Breast epithelium (tissue), 4 donors: ENCODE measurements at regions of chr1 and their contacts with region 1.

Region 1: GRCh38 chr1:203273206-203273868 is 32.0 kb upstream of the BTG2 start:
- DNase-seq: peak; percentile 84 to 86
- H3K4me3 ChIP-seq: peak overlapping the region; percentile 1 to 50 (median 28)
- H3K27ac ChIP-seq: peak overlapping the region; percentile 67 to 73
- H3K4me1 ChIP-seq: peaks cover 4 to 20% of the 10 kb centered on the region in 2 donors
- H3K27me3 ChIP-seq: no peaks in the 10 kb centered on the region
- CTCF ChIP-seq: peak; percentile 98 to 99 (median 99)
- POLR2A ChIP-seq: no peak

Region 2: GRCh38 chr1:203038891-203039608 is 234.3 kb before region 1 on chr1:
- intact Hi-C with region 1: loop called (anchors 10 kb)
- DNase-seq: peak; percentile 54 to 70
- H3K4me3 ChIP-seq: no peak overlapping the region
- H3K27ac ChIP-seq: no peak overlapping the region
- H3K4me1 ChIP-seq: no peaks in the 10 kb centered on the region
- H3K27me3 ChIP-seq: no peaks in the 10 kb centered on the region
- CTCF ChIP-seq: peak; percentile 85 to 89 (median 89)
- POLR2A ChIP-seq: no peak

Region 3: DNA sequence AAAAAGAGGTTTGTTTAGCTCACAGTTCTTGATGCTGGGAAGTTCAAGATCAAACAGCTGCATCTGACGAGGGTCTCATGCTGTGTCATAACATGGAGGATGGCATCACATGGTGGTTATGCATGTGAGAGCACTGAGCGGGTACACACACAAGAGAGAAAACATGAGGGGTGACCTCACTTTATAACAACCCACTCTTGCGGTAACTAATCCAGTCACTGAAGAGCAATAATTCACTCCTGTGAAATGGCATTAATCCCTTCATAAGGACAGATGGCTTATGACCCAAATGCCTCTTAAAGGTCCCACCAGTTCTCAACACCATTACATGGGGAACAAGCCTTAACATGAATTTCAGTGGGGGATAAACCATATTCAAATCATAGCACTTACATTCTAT is 20.7 kb before region 1 on chr1:
- intact Hi-C with region 1: no loop called
- DNase-seq: no peak
- H3K4me3 ChIP-seq: no peak overlapping the region
- H3K27ac ChIP-seq: no peak overlapping the region
- H3K4me1 ChIP-seq: no peaks in the 10 kb centered on the region
- H3K27me3 ChIP-seq: no peaks in the 10 kb centered on the region
- CTCF ChIP-seq: no peak
- POLR2A ChIP-seq: no peak

Region 4: DNA sequence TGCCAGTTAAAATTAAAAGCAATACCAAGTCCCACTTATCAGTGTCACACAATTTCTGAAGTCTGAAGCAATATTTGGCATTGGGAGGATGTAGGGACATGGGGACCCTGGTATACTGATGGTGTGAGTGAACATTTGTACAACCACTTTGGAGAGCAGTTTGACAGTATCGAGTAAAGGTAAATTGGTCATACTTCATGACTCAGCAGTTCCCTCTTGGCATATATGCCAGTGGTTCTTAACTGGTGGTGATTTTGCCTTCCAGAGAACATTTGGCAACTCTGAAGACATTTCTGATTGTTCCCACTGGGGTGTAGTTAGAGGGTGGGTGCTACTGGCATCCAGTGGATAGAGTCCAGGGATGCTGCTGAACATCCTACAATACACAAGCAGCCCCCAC is 57.9 kb after region 1 on chr1:
- intact Hi-C with region 1: loop called (anchors 5 kb)
- DNase-seq: no peak
- H3K4me3 ChIP-seq: no peak overlapping the region
- H3K27ac ChIP-seq: no peak overlapping the region
- H3K4me1 ChIP-seq: peaks cover 0 to 17% of the 10 kb centered on the region in 2 donors
- H3K27me3 ChIP-seq: no peaks in the 10 kb centered on the region
- CTCF ChIP-seq: no peak
- POLR2A ChIP-seq: no peak

Region 5: DNA sequence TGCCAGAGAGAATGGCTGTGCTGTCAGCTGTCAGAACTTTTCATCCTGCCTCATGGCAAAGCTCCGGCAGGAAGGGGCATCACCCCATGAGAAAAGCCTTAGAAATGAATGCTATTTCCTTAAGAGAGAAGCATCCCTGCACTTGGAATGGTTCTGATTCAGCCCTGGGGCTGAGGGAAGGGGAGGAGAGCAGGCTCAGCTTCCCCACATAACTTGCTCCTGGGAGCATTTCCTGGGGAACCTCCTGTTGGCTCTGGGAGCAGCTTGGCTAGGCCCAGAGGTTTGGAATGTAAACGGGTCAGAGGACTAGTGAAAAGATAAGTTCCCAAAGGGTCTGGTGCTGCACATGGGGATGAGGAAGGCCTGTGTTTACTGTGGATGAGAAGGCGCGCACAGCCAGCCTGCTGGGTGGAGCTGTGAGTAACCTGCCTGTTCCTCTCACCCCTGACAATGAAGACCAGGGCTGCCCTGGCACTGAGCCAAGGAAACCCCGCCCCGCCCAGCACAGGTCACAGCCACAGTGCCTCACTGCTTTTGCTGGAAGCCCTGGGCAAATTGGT is 207.3 kb after region 1 on chr1:
- intact Hi-C with region 1: loop called (anchors 10 kb)
- DNase-seq: peak; percentile 74
- H3K4me3 ChIP-seq: peak overlapping the region; percentile 22 to 57 (median 53)
- H3K27ac ChIP-seq: peak overlapping the region; percentile 83 to 93
- H3K4me1 ChIP-seq: peaks cover 8 to 19% of the 10 kb centered on the region in 2 donors
- H3K27me3 ChIP-seq: no peaks in the 10 kb centered on the region
- CTCF ChIP-seq: no peak
- POLR2A ChIP-seq: no peak

Region 6: DNA sequence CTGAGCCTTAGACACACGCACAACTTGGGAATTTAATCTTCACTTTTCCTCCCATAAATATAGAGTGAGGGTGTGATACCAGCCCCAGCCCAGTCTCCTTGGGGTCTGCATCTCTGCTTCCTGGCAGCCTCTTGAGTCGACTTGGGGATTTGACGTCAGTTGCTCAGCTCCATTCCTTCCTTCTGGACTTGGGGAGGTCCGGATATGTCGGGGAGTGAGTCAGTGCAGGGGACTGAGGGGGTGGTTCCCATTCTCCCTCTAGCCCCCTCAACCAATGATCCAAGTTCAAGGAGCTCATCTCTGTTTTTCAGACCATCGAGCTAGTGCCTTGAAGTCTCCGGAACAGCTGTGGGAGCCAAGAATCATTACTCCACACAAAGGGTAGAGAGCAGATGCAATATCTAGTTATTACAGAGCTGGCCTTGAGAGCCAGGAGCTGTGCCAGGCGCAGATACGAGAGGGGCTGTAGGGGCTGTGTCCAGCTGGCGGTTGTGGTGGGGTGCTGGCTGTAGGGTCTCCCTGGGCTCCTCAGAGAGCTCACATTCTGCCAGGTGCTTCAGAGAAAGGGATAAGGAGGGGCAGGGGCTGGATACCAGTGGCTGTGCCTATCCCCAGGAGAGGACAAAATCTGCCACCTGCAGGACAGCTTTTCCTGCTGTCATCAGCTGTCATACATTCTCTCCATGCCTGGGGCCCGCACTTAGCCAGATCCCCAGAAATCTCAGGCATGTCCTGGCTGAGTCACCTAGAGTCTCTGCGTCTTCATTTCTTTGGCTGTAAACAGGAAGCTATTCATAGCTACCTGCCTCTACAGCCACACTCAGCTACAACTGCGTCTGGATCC is 925.0 kb after region 1 on chr1:
- intact Hi-C with region 1: no loop called
- DNase-seq: peak; percentile 66 to 88
- H3K4me3 ChIP-seq: no peak overlapping the region
- H3K27ac ChIP-seq: peak overlapping the region; percentile 84 to 85
- H3K4me1 ChIP-seq: no peaks in the 10 kb centered on the region
- H3K27me3 ChIP-seq: no peaks in the 10 kb centered on the region
- CTCF ChIP-seq: peak in 1 of 3 donors; percentile 48
- POLR2A ChIP-seq: no peak